Dendritic cell treated with granulocyte-macrophage colony-stimulating factor and Interleukin-4, amounts not matched to agents 40 ng/mL and 50 ng/mL, for 4 days (primary cell): ENCODE measurements at regions of chr5 and their contacts with region 1.

Region 1: DNA sequence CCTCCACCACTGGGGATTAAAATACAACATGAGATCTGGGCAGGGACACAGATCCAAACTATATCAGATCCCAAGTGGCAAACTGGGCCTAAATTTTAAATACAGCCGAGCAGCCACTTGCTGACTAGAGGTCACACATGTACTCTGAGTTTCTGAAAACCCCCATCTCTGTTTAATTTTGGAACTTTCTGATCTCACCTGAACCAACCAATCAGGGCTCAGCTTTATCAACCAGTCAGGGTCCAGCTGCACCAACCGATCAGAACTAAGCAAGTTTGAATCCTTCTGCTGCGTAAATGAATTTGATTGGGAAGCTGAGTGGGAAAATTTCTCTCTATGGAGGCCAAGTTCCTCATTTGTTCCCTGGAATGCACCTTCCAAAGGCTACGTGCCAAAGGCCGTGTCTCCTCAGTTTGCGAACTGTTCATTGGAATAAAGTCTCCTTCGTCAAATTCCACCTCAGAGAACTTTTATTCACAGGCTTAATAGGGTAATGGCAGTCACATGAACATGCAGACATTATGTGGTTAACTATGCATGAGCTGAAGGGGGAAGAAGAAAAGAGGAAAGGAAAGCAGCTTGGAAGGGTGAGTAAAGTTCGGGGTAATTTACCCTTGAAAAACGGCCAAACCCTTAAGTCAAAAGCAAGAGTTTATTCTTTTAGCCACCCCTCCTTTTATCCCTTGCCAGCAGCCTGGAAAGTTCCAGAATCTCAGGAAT is 3.7 kb downstream of the CD180 start:
- H3K4me3 Mint-ChIP-seq: peak overlapping the region; percentile 80
- H3K27ac Mint-ChIP-seq: peak overlapping the region; percentile 88
- H3K4me1 Mint-ChIP-seq: peaks cover 89% of the 10 kb centered on the region
- H3K27me3 Mint-ChIP-seq: no peaks in the 10 kb centered on the region

Region 2: DNA sequence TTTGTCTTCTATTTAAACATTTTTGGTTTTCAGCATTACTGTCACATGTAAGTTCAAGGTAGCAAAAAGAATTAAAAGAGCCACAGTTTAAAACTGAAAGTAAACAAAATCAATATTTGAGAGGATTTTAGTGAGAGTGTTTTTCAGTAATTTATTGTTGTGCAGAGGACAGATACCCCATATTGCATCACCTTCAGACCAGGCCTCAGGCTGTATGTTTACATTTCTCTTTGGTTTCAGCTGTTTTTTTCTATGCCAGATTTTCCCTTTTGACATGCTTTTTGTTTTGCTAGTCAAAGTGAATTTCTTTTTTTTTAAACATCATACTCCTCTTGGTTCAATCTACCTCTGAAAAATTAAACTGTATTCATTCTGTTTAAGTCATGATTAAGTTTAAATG is 549.5 kb before region 1 on chr5:
- intact Hi-C with region 1: no loop called
- H3K4me3 Mint-ChIP-seq: no peak overlapping the region
- H3K27ac Mint-ChIP-seq: no peak overlapping the region
- H3K4me1 Mint-ChIP-seq: peaks cover 6% of the 10 kb centered on the region
- H3K27me3 Mint-ChIP-seq: no peaks in the 10 kb centered on the region

Region 3: DNA sequence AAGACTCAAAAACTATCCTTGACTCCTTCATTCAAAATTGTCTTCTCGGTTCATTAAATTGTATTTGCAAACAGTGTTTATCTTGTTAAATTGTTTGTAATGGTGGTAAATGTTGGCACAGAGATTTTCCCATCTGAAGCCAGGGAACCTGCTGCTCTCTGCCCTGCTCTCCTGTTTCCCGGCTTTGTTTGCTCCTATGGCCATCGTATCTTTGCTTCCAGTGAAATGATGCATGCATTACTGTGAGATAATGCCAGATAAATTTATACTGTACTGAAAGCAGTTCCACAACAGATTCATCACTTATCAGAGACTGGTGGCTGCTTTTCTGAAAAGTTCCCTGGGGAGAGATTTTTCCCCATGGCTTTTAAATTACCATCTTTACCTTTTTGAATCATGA is 77.6 kb before region 1 on chr5:
- intact Hi-C with region 1: no loop called
- H3K4me3 Mint-ChIP-seq: no peak overlapping the region
- H3K27ac Mint-ChIP-seq: no peak overlapping the region
- H3K4me1 Mint-ChIP-seq: no peaks in the 10 kb centered on the region
- H3K27me3 Mint-ChIP-seq: no peaks in the 10 kb centered on the region

Region 4: GRCh38 chr5:67165526-67166459 is 27.1 kb before region 1 on chr5:
- intact Hi-C with region 1: loop called (anchors 1 kb)
- H3K4me3 Mint-ChIP-seq: peak overlapping the region; percentile 77
- H3K27ac Mint-ChIP-seq: peak overlapping the region; percentile 95
- H3K4me1 Mint-ChIP-seq: peaks cover 56% of the 10 kb centered on the region
- H3K27me3 Mint-ChIP-seq: no peaks in the 10 kb centered on the region

Region 5: GRCh38 chr5:67221487-67222242 is 28.8 kb after region 1 on chr5:
- intact Hi-C with region 1: loop called (anchors 1 kb)
- H3K4me3 Mint-ChIP-seq: peak overlapping the region; percentile 65
- H3K27ac Mint-ChIP-seq: peak overlapping the region; percentile 91
- H3K4me1 Mint-ChIP-seq: peaks cover 61% of the 10 kb centered on the region
- H3K27me3 Mint-ChIP-seq: no peaks in the 10 kb centered on the region